ENCODE measurements at regions of chr2 and their contacts with region 1.

Region 1: GRCh38 chr2:223957092-223957851 is at the start of gene MRPL44:
- DNase-seq: peak; percentile 88
- ATAC-seq: peak; percentile 100
- H3K4me3 ChIP-seq: peak within 1 kb of the TSS; percentile 80 to 97 (median 86)
- H3K27ac ChIP-seq: peak within 1 kb of the TSS; percentile 76
- H3K4me1 ChIP-seq: peaks cover 58% of the 10 kb centered on the region
- H3K27me3 ChIP-seq: no peaks in the 10 kb centered on the region; a peak in 1 of 5 replicates
- CTCF ChIP-seq: peak; percentile 44
- EP300 ChIP-seq: peak; percentile 72 to 83; a peak in 3 of 4 replicates
- POLR2A ChIP-seq: peak; percentile 86 to 92
- RAD21 ChIP-seq: no peak; the same call in none of the 2 replicates
- total RNA-seq, gene MRPL44: 78.0 and 101 TPM in 2 replicates

Region 2: GRCh38 chr2:223896833-223897311 is 60.4 kb before region 1 on chr2:
- CTCF ChIA-PET with region 1: no interaction called
- POLR2A ChIA-PET with region 1: no interaction called
- in situ Hi-C with region 1: no loop called
- intact Hi-C with region 1: loop called (anchors 1 kb)
- DNase-seq: no peak
- ATAC-seq: no peak
- H3K4me3 ChIP-seq: no peak overlapping the region
- H3K27ac ChIP-seq: no peak overlapping the region
- H3K4me1 ChIP-seq: peaks cover 15% of the 10 kb centered on the region
- H3K27me3 ChIP-seq: no peaks in the 10 kb centered on the region
- CTCF ChIP-seq: no peak
- EP300 ChIP-seq: no peak
- POLR2A ChIP-seq: no peak
- RAD21 ChIP-seq: no peak

Region 3: DNA sequence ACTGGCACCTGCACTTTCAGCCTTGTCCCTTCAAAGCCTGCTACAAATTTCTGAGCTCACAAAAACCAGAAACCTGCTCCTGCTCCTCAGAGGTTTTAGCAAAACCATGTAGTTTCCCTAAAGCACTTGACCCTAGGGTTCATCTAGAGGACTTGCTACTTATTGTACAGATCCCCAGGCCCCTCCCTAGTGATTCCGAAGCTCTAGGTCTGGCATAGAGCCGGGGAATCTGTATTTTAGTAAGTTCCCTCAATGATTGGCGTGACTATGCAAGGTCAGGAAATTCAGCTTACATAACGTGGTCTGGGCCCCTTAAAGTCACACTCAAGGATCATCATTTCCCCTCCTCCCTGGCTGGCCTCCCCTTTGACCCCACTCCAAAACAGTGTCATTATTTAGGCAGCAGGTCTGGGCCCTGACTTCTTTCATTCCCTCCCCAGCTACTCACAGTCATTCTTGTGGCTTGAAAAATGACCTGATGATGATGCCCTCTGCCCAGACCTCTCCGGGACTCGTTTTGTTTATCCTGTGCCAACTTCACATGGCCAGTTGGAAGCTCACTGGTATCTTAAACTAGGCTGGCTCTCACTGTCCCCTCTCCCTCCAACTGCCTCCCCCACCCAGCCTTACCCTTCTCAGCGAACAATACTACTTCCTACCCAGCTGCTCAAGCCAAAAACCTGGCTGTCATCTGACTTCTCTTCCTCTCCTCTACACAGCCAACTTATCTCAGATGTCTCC is 48.1 kb before region 1 on chr2:
- CTCF ChIA-PET with region 1: no interaction called
- POLR2A ChIA-PET with region 1: interaction called, 3 read pairs
- in situ Hi-C with region 1: loop called (anchors 5 kb)
- intact Hi-C with region 1: loop called (anchors 2 kb)
- DNase-seq: peak; percentile 50
- ATAC-seq: peak; percentile 4
- H3K4me3 ChIP-seq: peak overlapping the region in 2 of 3 experiments; percentile 10 to 32; a peak in 3 of 6 replicates
- H3K27ac ChIP-seq: peak overlapping the region; percentile 66
- H3K4me1 ChIP-seq: peaks cover 40% of the 10 kb centered on the region
- H3K27me3 ChIP-seq: no peaks in the 10 kb centered on the region
- CTCF ChIP-seq: no peak
- EP300 ChIP-seq: no peak; a peak in 1 of 4 replicates
- POLR2A ChIP-seq: no peak
- RAD21 ChIP-seq: no peak

Region 4: DNA sequence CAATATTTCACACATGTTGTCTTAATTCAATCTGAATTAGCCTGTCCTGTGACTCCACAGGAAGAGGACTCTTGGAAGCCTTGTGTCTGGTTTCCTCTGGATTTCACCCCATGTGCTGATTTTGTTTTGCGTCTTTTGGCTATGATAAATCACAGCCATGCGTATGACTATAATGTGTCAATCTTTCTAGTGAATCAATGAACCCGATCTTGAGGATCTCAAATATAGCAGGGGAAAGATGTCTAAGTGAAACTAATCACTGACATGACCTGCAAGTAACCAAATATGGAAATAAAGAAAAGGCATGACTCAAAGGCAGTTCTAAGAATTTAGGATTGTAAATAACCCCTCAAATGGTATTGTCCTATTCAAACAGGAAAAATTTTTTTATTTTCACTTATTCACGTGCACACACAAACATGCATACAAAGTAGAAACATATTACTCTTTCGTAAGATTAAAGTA is 20.4 kb before region 1 on chr2:
- CTCF ChIA-PET with region 1: no interaction called
- POLR2A ChIA-PET with region 1: interaction called, 3 read pairs
- in situ Hi-C with region 1: no loop called
- intact Hi-C with region 1: loop called (anchors 1 kb)
- DNase-seq: no peak
- ATAC-seq: no peak
- H3K4me3 ChIP-seq: no peak overlapping the region
- H3K27ac ChIP-seq: no peak overlapping the region
- H3K4me1 ChIP-seq: peaks cover 79% of the 10 kb centered on the region
- H3K27me3 ChIP-seq: no peaks in the 10 kb centered on the region
- CTCF ChIP-seq: no peak
- EP300 ChIP-seq: no peak
- POLR2A ChIP-seq: no peak
- RAD21 ChIP-seq: no peak

Region 5: DNA sequence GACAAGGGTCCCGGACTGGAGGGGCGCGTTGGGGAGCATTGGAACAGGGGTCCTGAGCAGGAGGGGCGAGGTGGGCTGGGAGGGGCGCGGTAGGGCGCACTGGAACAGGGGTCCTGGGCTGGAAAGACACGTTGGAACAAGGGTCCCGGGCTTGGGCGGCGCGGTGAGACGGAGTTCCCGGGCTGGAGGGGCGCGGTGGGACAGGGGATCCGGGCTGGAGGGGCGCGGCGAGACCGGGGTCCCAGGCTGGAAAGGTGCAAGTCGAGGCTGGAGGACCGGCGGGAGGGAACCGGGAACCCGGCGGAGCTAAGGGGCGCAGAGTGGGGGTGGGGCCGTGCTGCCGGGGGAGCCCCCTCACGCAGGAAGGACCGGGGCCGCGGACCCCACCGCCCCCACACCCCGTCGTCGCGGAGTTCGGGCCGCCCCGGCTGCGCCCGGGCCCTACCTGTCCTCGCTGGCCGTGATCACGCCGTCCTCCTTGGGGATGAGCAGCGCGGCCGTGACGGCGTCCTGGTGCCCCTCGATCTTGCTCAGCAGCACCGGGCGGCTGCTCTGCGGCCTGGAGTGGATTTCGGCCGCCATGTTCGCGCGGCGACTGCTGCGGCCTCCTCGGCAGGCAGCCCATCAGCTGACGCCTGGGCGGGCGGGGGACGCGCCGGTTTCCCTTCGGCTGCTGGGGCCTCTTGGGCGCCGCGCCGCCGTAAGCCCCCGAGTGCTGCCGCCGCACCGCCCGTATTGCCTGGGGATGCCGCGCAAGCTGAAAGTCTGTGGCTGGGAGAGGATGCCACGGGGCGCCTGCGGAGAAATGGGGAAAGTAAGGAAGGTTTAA is 12.4 kb before region 1 on chr2 and contains the start of gene WDFY1:
- CTCF ChIA-PET with region 1: no interaction called
- POLR2A ChIA-PET with region 1: interaction called, 30 read pairs
- in situ Hi-C with region 1: no loop called
- intact Hi-C with region 1: no loop called
- DNase-seq: peak; percentile 75
- ATAC-seq: peak; percentile 95
- H3K4me3 ChIP-seq: peak within 1 kb of the TSS; percentile 80 to 100 (median 99)
- H3K27ac ChIP-seq: peak within 1 kb of the TSS; percentile 85
- H3K4me1 ChIP-seq: peaks cover 37% of the 10 kb centered on the region
- H3K27me3 ChIP-seq: no peaks in the 10 kb centered on the region; a peak in 1 of 5 replicates
- CTCF ChIP-seq: peak; percentile 24; the same call in 1 of the 2 replicates
- EP300 ChIP-seq: peak; percentile 69 to 77; a peak in 3 of 4 replicates
- POLR2A ChIP-seq: peak; percentile 90 to 95
- RAD21 ChIP-seq: peak; percentile 80
- total RNA-seq, gene WDFY1: 77.0 and 92.1 TPM in 2 replicates

Measured in HepG2 (cell line).